Calu3 (cell line): ENCODE measurements at regions of chrX and their contacts with region 1.

Region 1: GRCh38 chrX:79366873-79367749 is at the start of gene ITM2A:
- DNase-seq: peak; percentile 18
- H3K4me3 Mint-ChIP-seq: peak within 1 kb of the TSS; percentile 84
- H3K27ac Mint-ChIP-seq: peak within 1 kb of the TSS; percentile 70
- H3K4me1 Mint-ChIP-seq: peaks cover 36% of the 10 kb centered on the region
- H3K27me3 Mint-ChIP-seq: no peaks in the 10 kb centered on the region
- CTCF ChIP-seq: no peak
- total RNA-seq, gene ITM2A: 17.7 and 25.7 TPM in 2 replicates

Region 2: DNA sequence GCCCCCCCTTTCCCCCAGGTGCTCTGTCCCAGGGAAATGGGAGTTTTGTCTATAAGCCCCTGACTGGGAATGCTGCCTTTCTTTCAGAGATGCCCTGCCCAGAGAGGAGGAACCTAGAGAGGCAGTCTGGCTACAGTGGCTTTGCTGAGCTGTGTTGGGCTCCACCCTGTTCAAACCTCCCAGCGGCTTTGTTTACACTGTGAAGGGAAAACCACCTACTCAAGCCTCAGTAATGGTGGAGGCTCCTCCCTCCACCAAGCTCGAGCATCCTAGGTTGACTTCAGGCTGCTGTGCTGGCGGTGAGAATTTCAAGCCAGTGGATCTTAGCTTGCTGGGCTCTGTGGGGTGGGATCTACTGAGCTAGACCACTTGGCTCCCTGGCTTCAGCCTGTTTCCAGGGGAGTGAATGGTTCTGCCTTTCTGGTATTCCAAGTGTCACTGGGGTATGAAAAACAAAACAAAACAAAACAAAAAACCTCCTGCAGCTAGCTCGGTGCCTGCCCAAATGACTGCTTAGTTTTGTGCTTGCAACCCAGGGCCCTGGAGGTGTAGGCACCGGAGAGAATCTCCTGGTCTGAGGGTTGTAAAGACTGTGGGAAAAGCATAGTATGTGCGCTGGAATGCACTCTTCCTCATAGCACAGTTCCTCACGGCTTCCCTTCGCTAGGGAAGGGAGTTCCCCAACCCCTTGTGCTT is 41.7 kb before region 1 on chrX:
- CTCF ChIA-PET with region 1: no interaction called
- intact Hi-C with region 1: no loop called
- DNase-seq: peak; percentile 41
- H3K4me3 Mint-ChIP-seq: peak overlapping the region; percentile 55
- H3K27ac Mint-ChIP-seq: no peak overlapping the region
- H3K4me1 Mint-ChIP-seq: peaks cover 16% of the 10 kb centered on the region
- H3K27me3 Mint-ChIP-seq: no peaks in the 10 kb centered on the region
- CTCF ChIP-seq: no peak

Region 3: DNA sequence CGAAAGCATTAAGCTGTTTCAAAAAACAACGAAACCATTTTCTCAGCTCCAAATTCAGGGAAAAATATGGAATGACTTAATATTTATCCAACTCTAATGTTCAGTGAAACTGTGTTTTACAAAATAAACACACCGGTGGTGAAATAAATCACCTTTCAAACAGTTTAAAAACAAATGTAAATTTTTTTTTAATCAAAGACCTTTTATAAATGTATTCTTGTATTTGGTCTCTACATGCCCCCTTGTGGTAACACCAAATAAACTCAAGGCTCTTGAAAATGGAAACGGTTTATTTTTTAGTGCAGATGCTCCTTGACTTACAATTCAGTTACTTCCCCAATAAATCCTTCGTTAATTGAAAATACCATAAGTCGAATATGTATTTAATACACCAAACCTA is 45.9 kb after region 1 on chrX:
- CTCF ChIA-PET with region 1: no interaction called
- intact Hi-C with region 1: loop called (anchors 5 kb)
- DNase-seq: no peak
- H3K4me3 Mint-ChIP-seq: peak overlapping the region; percentile 36
- H3K27ac Mint-ChIP-seq: peak overlapping the region; percentile 27
- H3K4me1 Mint-ChIP-seq: peaks cover 8% of the 10 kb centered on the region
- H3K27me3 Mint-ChIP-seq: no peaks in the 10 kb centered on the region
- CTCF ChIP-seq: peak; percentile 39

Region 4: GRCh38 chrX:79524642-79525041 is 157.5 kb after region 1 on chrX:
- CTCF ChIA-PET with region 1: no interaction called
- intact Hi-C with region 1: no loop called
- DNase-seq: peak; percentile 6
- H3K4me3 Mint-ChIP-seq: no peak overlapping the region
- H3K27ac Mint-ChIP-seq: no peak overlapping the region
- H3K4me1 Mint-ChIP-seq: no peaks in the 10 kb centered on the region
- H3K27me3 Mint-ChIP-seq: no peaks in the 10 kb centered on the region
- CTCF ChIP-seq: peak; percentile 27